ENCODE measurements at regions of chr3 and their contacts with region 1.

Region 1: GRCh38 chr3:113495035-113495434 is 19.9 kb downstream of the SPICE1 start:
- DNase-seq: peak; percentile 61

Region 2: GRCh38 chr3:113339616-113340244 is 155.3 kb before region 1 on chr3:
- in situ Hi-C with region 1: no loop called
- DNase-seq: peak; percentile 24

Region 3: DNA sequence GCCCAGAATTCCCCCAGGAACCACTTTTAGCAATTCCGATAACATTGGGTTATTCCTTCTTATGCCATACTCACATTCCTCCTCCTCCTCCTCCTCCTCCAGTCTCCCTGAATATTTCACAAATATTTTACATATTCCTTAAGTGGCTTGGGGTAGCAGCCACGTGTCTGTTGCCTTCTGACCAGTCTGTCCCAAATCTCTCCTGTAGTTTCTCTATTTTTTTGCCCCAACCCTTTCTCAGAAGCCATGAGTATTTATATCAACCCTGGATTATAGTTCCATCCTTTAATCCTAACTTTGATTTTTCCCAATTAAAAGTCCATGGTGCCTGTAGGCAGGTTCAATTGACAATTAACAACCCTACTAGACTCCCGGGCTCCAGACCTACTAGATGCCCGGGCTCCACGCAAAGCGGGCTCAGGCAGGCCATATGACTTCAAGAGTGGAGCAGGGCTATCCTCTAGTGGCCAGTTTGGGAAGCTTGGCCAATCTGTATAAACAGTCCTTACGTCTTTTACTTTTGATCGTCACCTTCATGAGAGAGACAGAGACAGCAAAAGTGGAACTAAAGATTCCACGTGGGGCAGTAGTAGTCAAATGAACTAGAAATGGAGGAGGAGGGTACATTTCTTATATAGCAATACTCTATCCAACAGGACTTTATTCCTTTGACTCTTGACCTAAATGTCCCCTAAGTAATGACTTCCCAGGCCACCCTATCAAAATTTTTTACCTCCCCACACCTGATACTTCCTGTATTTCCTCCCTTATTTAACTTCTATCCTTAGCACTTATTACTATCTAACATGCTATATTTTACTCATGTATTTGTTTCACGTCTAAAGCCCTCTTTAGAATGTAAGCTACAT is 131.7 kb after region 1 on chr3:
- in situ Hi-C with region 1: loop called (anchors 10 kb)
- DNase-seq: peak; percentile 86